Mammary epithelial cell (primary cell): ENCODE measurements at regions of chr10 and their contacts with region 1.

Region 1: GRCh38 chr10:101467286-101467770 is 113.4 kb downstream of the BTRC start:
- DNase-seq: peak; percentile 73
- H3K4me3 ChIP-seq: peak overlapping the region in 1 of 3 experiments; percentile 11
- H3K27ac ChIP-seq: no peak overlapping the region
- H3K4me1 ChIP-seq: no peaks in the 10 kb centered on the region
- H3K27me3 ChIP-seq: no peaks in the 10 kb centered on the region
- CTCF ChIP-seq: peak; percentile 90 to 98

Region 2: DNA sequence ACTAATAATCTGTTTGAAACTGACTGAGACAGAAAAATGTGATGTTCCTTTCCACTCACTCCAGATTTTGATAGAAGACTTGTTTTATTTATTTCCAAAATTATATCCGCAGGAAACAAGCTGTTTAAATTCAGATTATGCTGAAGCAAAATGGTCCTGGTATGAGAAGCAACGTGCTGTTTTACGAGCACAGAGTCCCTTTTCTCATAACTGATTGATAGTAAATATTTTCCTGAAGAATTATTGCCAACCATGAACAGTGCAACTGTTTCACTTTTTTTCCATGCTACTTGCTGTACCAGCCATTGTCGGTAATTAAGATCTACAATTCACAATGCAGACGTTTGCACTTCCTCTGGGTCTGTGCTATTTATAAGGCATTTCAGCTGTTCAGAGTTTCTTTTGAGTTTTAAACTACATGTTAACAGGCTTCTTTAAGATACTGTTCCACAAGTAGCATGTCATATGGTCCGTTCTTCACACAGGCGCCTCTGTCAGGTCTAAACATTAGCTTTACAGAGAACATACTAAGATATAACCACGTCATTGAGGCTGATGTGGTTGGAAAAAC is 16.9 kb after region 1 on chr10:
- CTCF ChIA-PET with region 1: interaction called, 15 read pairs
- dilution Hi-C with region 1: no loop called
- in situ Hi-C with region 1: no loop called
- intact Hi-C with region 1: no loop called
- DNase-seq: no peak
- H3K4me3 ChIP-seq: no peak overlapping the region
- H3K27ac ChIP-seq: no peak overlapping the region
- H3K4me1 ChIP-seq: no peaks in the 10 kb centered on the region
- H3K27me3 ChIP-seq: no peaks in the 10 kb centered on the region
- CTCF ChIP-seq: no peak

Region 3: GRCh38 chr10:102375250-102375649 is 907.9 kb after region 1 on chr10:
- CTCF ChIA-PET with region 1: no interaction called
- dilution Hi-C with region 1: no loop called
- in situ Hi-C with region 1: no loop called
- intact Hi-C with region 1: no loop called
- DNase-seq: no peak
- H3K4me3 ChIP-seq: no peak overlapping the region
- H3K27ac ChIP-seq: no peak overlapping the region
- H3K4me1 ChIP-seq: no peaks in the 10 kb centered on the region
- H3K27me3 ChIP-seq: no peaks in the 10 kb centered on the region
- CTCF ChIP-seq: no peak